Right cardiac atrium (tissue), 5 donors: ENCODE measurements at regions of chr2 and their contacts with region 1.

Region 1: DNA sequence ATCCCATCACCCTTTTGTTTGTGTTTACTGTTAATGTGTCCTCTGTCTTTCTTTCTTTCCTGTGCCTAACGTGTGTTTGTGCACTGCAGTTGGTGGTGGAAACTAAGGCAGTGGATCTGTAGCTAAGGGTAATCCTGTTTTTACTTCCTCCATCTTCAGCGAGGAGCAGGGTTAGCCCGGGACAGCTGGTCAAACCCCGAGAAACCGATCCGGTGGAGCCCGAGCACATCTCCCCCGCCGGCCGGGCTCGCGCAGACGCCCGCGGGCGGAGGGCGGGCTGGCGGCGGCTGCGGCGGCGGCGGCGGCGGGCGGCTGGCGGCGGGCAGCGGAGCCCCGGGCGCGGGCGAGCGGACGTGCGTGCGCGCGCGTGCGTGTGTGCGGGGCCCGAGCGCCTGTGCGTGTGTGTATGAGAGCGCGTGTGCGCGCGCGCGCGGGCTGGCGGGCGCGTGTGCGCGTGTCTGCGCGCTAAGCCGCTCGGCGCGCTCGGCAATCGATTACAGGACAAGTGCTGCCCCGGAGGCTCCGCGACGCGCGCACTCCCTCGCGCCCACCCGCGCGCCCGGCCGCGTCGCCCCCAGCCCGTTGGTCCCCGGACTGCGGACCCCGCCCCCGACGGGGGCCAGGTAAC is at the start of gene IKZF2:
- DNase-seq: peak; percentile 90 to 95 (median 94)
- ATAC-seq: peak; percentile 96
- H3K4me3 ChIP-seq: peak within 1 kb of the TSS; percentile 80
- H3K27ac ChIP-seq: peak within 1 kb of the TSS; percentile 94
- H3K4me1 ChIP-seq: no peaks in the 10 kb centered on the region
- H3K27me3 ChIP-seq: no peaks in the 10 kb centered on the region
- total RNA-seq, gene IKZF2: 5.8 to 8.1 (median 6.9) TPM

Region 2: DNA sequence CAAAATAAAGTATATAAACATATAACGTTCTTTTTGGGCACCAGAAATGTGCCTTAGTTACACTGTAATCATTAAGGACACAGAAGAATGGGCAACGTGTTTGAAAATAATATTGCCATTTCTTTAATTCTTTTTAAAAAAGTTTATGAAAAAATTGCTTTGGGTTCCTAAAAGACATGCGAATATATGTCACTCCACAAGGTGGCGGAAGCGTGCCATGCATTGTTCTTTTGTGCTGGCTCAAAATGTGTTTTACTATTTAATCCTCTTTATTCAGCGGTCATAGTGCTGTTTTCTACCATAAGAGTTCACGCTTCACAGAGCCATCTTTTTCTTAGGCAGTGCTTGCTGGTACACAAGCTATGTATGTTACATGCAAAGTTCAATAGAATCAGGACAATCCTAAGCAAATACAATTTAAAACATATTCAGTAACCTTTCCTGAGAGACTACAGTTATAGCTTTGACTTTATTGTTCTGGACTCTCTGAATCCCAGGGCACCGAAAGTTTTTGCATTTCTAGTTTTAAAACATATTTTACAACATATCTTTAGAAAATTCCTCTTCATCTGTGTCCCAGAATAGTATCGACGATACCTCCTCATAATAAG is 465.2 kb before region 1 on chr2:
- intact Hi-C with region 1: loop called in 1 of 4 experiments (anchors 5 kb)
- DNase-seq: peak; percentile 46 to 74 (median 49)
- ATAC-seq: no peak
- H3K4me3 ChIP-seq: no peak overlapping the region
- H3K27ac ChIP-seq: no peak overlapping the region
- H3K4me1 ChIP-seq: no peaks in the 10 kb centered on the region
- H3K27me3 ChIP-seq: no peaks in the 10 kb centered on the region

Region 3: GRCh38 chr2:212777020-212777491 is 374.5 kb before region 1 on chr2:
- intact Hi-C with region 1: loop called (anchors 1 to 10 kb)
- DNase-seq: no peak
- ATAC-seq: no peak
- H3K4me3 ChIP-seq: no peak overlapping the region
- H3K27ac ChIP-seq: no peak overlapping the region
- H3K4me1 ChIP-seq: no peaks in the 10 kb centered on the region
- H3K27me3 ChIP-seq: no peaks in the 10 kb centered on the region